IMR-90 (cell line): ENCODE measurements at regions of chr7 and their contacts with region 1.

Region 1: GRCh38 chr7:18666107-18666728 is 170.7 kb downstream of the HDAC9 start:
- DNase-seq: peak; percentile 74
- ATAC-seq: peak; percentile 84
- H3K4me3 ChIP-seq: no peak overlapping the region
- H3K27ac ChIP-seq: no peak overlapping the region
- H3K4me1 ChIP-seq: no peaks in the 10 kb centered on the region
- H3K27me3 ChIP-seq: no peaks in the 10 kb centered on the region
- CTCF ChIP-seq: peak; percentile 81
- POLR2A ChIP-seq: no peak
- RAD21 ChIP-seq: peak; percentile 67

Region 2: DNA sequence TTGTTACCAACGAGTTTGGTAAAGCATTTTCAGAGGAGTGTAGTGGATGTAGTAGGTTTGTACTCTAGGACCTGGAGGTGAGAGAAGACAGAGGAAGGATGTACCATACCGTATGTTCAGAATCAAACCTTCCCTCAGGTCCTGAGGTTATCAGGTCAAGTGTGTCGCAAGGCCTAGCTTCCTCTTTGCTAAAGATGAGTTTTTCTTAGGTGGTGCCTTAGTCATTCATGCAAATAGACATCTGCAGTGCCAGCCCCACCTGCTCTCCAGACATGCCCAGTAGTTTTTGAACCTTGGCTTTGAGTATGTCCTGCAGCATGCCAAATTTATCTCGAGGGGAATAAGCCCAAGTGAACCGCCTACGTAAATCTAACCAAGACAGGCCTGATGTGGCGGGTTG is 99.4 kb before region 1 on chr7:
- CTCF ChIA-PET with region 1: no interaction called
- POLR2A ChIA-PET with region 1: no interaction called
- dilution Hi-C with region 1: no loop called
- in situ Hi-C with region 1: no loop called
- intact Hi-C with region 1: no loop called
- DNase-seq: no peak
- ATAC-seq: no peak
- H3K4me3 ChIP-seq: no peak overlapping the region
- H3K27ac ChIP-seq: no peak overlapping the region
- H3K4me1 ChIP-seq: no peaks in the 10 kb centered on the region
- H3K27me3 ChIP-seq: no peaks in the 10 kb centered on the region
- CTCF ChIP-seq: no peak
- POLR2A ChIP-seq: no peak
- RAD21 ChIP-seq: no peak

Region 3: DNA sequence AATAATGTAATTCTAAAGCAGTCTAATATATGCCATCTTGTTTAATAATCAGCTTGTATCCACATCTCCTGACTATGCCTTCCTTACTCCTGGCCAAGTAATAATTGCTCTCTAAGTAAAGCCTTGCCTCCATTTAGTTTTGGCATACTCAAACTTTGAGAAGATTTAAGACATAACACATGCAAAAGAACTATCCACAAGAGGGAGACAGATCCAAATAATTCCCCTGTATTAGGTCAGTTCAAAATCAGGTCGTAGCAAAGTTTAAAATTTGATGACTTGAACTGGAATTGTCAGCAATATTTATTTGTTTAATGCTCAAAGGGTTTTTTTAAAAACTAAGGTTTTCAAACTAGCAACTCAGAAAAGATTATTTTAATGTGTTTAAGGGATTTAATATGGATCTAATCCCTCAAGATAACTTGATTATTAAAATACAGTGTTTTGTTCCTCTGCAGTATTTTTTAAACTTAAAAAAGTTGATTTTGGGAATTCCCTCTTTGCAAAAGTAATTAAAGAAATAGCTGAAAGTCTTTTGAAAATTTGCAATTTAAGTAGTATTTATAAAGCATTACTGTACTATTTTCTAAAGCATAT is 75.4 kb before region 1 on chr7:
- CTCF ChIA-PET with region 1: interaction called, 21 read pairs
- POLR2A ChIA-PET with region 1: no interaction called
- dilution Hi-C with region 1: no loop called
- in situ Hi-C with region 1: no loop called
- intact Hi-C with region 1: loop called (anchors 1 kb)
- DNase-seq: peak; percentile 67
- ATAC-seq: peak; percentile 80
- H3K4me3 ChIP-seq: no peak overlapping the region
- H3K27ac ChIP-seq: no peak overlapping the region
- H3K4me1 ChIP-seq: 0 out of 2 replicates have a peak, but pooled peaks cover 1% of the 10 kb centered on the region
- H3K27me3 ChIP-seq: no peaks in the 10 kb centered on the region
- CTCF ChIP-seq: peak; percentile 68
- POLR2A ChIP-seq: no peak
- RAD21 ChIP-seq: peak; percentile 81

Region 4: DNA sequence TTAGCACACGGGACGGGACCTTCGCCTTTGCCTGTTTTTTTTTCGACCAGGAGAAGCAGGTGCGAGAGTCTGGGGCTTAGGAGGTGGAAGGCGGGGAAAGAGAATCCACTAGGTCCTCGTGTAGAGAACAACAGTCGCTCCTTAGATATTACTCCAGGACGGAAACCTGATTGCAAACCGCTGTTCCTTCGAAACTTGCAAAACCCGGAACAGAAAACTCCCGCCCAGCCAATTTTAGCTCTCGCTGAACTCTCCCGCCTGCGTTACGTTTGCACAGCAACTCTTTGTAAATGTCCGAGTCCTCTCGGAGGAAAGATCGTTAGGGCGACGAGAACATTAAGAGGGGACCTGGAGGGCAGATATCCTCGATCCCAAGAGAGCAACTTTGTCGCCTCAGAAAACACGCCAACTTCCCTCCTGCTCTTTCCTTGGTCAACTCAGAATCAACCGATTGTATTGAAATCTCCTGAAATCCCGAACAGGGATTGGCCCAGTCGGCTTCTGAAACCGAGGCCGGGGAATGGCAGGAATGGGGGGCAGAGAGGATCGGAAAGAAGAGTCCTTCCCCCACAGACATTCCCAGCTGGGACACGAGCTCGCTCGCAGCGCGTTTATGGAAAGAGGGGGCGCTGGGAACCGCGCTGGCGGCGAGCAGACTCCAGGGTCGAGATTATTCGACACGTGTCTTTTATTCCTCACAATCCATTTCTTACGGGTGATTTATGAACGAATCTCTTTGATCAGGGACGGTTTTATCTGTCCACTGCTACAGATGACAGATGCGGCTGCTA is 441.3 kb after region 1 on chr7:
- CTCF ChIA-PET with region 1: no interaction called
- POLR2A ChIA-PET with region 1: no interaction called
- dilution Hi-C with region 1: no loop called
- in situ Hi-C with region 1: no loop called
- intact Hi-C with region 1: loop called (anchors 5 kb)
- DNase-seq: peak; percentile 68
- ATAC-seq: peak; percentile 74
- H3K4me3 ChIP-seq: peak overlapping the region; percentile 45
- H3K27ac ChIP-seq: peak overlapping the region; percentile 52
- H3K4me1 ChIP-seq: peaks cover 6% of the 10 kb centered on the region
- H3K27me3 ChIP-seq: no peaks in the 10 kb centered on the region
- CTCF ChIP-seq: no peak
- POLR2A ChIP-seq: no peak
- RAD21 ChIP-seq: no peak